ENCODE measurements at regions of chr2 and their contacts with region 1.

Region 1: DNA sequence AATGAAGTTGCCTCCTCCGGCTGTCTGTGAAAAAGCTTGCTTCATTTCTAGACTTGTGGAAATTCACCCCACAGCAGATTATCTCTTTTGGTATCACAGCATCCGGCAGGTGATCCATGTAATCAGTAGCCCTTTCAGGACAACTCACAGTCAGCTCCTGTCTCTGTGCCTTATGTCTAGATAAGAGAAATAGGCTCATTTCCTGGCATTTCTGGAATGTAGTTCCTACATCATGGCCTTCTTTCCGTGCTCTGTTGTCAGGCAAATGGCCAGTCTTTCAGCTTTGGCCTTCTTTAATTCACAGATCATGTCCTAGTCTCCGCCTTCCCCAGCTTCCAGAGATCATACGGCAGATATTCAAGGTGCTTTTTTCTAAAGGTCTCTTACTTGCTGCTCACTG is 455.5 kb downstream of the NUP35 start:
- DNase-seq: no peak
- H3K4me3 ChIP-seq: no peak overlapping the region
- H3K27ac ChIP-seq: no peak overlapping the region
- H3K4me1 ChIP-seq: no peaks in the 10 kb centered on the region
- H3K27me3 ChIP-seq: no peaks in the 10 kb centered on the region

Region 2: GRCh38 chr2:183552716-183553115 is 27.0 kb before region 1 on chr2:
- CTCF ChIA-PET with region 1: no interaction called
- POLR2A ChIA-PET with region 1: interaction called, 10 read pairs
- DNase-seq: no peak
- H3K4me3 ChIP-seq: no peak overlapping the region
- H3K27ac ChIP-seq: no peak overlapping the region
- H3K4me1 ChIP-seq: no peaks in the 10 kb centered on the region
- H3K27me3 ChIP-seq: no peaks in the 10 kb centered on the region